PC-3 (cell line): ENCODE measurements at regions of chr2 and their contacts with region 1.

Region 1: DNA sequence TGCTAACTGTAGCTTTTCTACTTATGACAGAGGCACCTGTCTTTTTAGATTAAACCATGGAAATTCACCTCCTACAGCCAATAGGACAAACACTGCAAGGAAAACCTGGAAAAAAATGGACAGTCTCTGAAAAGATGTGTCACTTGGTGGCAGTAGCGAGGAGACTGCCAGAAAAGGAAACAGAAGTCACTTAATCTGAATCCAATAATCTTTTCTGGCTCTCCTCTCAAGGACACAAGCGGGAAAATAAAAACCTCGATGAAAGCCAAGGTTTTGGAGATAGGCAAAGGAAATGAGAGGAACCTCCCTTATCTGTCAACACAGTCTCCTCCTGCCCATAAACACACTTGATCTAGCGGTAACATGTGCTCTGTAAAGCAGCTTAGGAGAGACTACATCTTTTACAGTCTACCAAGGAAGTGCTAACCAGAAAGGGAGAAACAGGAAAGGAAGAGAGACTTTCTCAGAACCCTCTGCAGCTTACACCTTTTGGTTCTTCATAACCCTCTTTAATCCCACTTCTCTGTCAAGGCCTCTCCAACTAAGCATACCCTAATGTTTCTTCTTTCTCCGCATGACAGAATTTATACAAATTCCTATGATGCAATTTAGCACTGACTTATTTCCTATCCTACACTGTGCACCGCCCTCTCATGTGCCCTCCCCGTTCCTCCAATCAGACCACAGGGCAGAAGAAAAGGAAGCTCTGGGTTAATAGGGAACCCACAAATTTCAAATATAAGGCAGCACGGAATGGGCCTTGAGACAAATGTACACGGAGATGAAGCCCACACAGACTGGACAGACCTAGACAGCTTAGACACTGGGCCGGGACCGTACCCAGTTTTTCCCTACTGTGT is 52.8 kb downstream of the CLASP1 start:
- DNase-seq: peak; percentile 74
- ATAC-seq: peak; percentile 68
- H3K4me3 ChIP-seq: peak overlapping the region; percentile 39
- H3K27ac ChIP-seq: peak overlapping the region; percentile 48
- H3K4me1 ChIP-seq: peaks cover 32% of the 10 kb centered on the region
- H3K27me3 ChIP-seq: no peaks in the 10 kb centered on the region
- CTCF ChIP-seq: peak; percentile 86

Region 2: GRCh38 chr2:120735746-120736170 is 860.7 kb before region 1 on chr2 and contains the start of gene GLI2:
- CTCF ChIA-PET with region 1: no interaction called
- POLR2A ChIA-PET with region 1: no interaction called
- intact Hi-C with region 1: no loop called
- DNase-seq: peak; percentile 82
- ATAC-seq: peak; percentile 56
- H3K4me3 ChIP-seq: peak within 1 kb of the TSS; percentile 79
- H3K27ac ChIP-seq: 0 out of 2 replicates have a peak within 1 kb of the TSS, but pooled peaks have one; percentile 36
- H3K4me1 ChIP-seq: peaks cover 18% of the 10 kb centered on the region
- H3K27me3 ChIP-seq: no peaks in the 10 kb centered on the region
- CTCF ChIP-seq: peak; percentile 81
- total RNA-seq, gene GLI2: 4.0 and 30.3 TPM in 2 replicates

Region 3: GRCh38 chr2:121400201-121400600 is 196.2 kb before region 1 on chr2:
- CTCF ChIA-PET with region 1: no interaction called
- POLR2A ChIA-PET with region 1: no interaction called
- intact Hi-C with region 1: loop called (anchors 10 kb)
- DNase-seq: no peak
- ATAC-seq: no peak
- H3K4me3 ChIP-seq: no peak overlapping the region
- H3K27ac ChIP-seq: no peak overlapping the region
- H3K4me1 ChIP-seq: no peaks in the 10 kb centered on the region
- H3K27me3 ChIP-seq: no peaks in the 10 kb centered on the region
- CTCF ChIP-seq: no peak

Region 4: DNA sequence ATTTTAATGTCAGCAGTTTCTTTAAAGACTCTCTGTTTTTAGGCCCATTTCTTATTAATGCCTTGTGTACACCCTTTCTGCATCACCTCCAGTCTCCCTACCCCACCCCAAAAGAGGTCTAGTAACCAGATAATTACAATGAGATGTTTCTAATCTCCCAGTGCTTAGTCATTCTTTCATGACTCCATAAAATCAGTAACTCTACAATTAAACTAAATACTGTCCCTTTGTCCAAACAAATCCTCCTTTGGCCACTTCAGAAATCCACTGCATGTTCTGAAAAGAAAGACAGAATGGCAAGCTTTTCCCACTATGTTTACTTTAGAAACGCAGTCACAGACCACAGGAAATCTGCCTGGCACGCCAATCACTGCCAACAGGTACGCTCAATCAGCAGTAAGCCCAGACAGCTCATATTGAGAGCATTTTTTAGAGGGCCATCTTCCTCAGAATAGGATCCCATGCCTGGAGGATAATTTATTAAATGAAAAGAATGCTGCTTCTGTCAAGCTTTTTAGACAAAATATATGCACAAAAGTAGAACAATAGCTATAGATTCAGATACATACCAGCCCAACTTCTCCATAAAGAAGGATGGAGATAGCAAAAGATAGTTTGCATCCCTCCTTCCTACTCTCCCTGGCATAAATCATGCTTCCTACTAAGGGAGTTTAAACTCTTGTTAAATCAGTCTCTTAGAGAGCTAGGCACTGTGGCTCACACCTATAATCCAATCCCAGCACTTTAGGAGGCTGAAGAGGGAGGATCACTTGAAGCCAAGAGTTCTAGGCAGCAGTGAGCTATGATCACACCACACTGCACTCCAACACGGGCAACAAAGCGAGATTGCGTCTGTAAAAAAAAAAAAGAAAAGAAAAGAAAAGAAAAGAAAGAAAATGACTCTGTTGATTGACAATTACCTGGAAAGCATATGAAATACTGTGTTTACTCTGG is 38.2 kb after region 1 on chr2:
- CTCF ChIA-PET with region 1: no interaction called
- POLR2A ChIA-PET with region 1: no interaction called
- intact Hi-C with region 1: loop called (anchors 1 kb)
- DNase-seq: peak; percentile 95
- ATAC-seq: peak; percentile 94
- H3K4me3 ChIP-seq: peak overlapping the region; percentile 25; the same call in 1 of the 2 replicates
- H3K27ac ChIP-seq: peak overlapping the region; percentile 97
- H3K4me1 ChIP-seq: peaks cover 27% of the 10 kb centered on the region
- H3K27me3 ChIP-seq: no peaks in the 10 kb centered on the region
- CTCF ChIP-seq: no peak

Region 5: DNA sequence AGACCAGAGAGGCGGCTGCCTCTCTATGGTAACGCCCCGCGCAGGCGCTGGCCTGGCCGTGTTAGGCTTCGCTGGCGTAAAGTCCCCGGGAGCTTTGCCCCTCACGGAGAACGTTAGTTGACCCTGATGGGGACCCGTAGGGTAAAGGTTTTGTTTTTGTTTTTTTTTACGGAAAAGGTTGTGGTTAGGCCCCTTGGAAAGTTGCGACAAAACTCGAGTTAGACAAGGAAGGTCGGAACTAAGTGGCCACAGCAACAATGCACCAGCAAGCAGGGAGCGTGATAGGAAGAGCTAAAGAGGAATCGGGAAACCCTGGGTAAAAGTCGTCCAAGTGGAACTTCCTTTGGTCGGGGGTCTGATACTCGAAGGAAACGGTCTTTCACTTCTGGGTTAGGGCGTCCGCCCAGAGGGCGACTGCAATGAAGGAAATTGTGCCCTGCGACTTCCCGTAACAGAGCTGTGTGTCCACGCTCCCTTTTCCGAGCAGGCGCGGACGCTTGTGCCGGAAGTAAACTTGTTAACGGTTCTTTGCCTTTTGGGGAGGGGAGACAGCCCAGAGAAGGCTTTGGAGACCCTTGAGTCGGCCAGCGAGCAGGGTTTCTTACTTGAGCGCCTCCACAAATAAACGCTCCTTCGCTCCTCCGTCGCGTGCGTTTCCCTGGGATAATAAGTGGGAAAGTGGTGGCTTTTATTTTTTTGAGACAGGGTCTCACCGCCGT is 53.3 kb after region 1 on chr2:
- CTCF ChIA-PET with region 1: interaction called, 6 read pairs
- POLR2A ChIA-PET with region 1: no interaction called
- intact Hi-C with region 1: loop called (anchors 1 kb)
- DNase-seq: peak; percentile 96
- ATAC-seq: peak; percentile 90
- H3K4me3 ChIP-seq: peak overlapping the region; percentile 87
- H3K27ac ChIP-seq: peak overlapping the region; percentile 85
- H3K4me1 ChIP-seq: peaks cover 21% of the 10 kb centered on the region
- H3K27me3 ChIP-seq: no peaks in the 10 kb centered on the region
- CTCF ChIP-seq: no peak

Region 6: GRCh38 chr2:121689356-121689755 is 92.9 kb after region 1 on chr2:
- CTCF ChIA-PET with region 1: no interaction called
- POLR2A ChIA-PET with region 1: no interaction called
- intact Hi-C with region 1: loop called (anchors 2 kb)
- DNase-seq: peak; percentile 63
- ATAC-seq: peak; percentile 88
- H3K4me3 ChIP-seq: no peak overlapping the region
- H3K27ac ChIP-seq: no peak overlapping the region
- H3K4me1 ChIP-seq: 0 out of 2 replicates have a peak, but pooled peaks cover 3% of the 10 kb centered on the region
- H3K27me3 ChIP-seq: no peaks in the 10 kb centered on the region
- CTCF ChIP-seq: peak; percentile 62; the same call in 1 of the 2 replicates

Region 7: DNA sequence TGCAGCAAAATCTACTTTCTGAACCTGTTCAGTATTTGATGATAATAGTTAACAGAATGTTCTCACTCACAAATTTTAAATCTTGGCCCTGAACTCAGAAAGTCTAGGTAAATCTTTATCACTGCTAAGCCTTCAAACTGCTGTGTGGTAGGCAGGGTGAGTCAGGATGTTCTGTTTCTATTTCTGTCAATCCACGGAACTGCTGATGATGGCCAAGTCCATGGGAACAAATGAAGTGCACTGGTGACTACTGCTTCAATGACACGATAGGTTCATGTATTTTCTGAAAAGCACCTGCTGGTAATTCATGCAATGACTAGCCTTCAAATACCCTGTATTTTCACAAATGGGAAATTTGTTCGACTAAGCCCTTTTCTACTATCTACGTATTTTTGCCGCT is 126.0 kb after region 1 on chr2:
- CTCF ChIA-PET with region 1: no interaction called
- POLR2A ChIA-PET with region 1: no interaction called
- intact Hi-C with region 1: loop called (anchors 1 kb)
- DNase-seq: peak; percentile 67
- ATAC-seq: peak; percentile 73
- H3K4me3 ChIP-seq: peak overlapping the region; percentile 39
- H3K27ac ChIP-seq: peak overlapping the region; percentile 86
- H3K4me1 ChIP-seq: peaks cover 16% of the 10 kb centered on the region
- H3K27me3 ChIP-seq: no peaks in the 10 kb centered on the region
- CTCF ChIP-seq: no peak